ENCODE measurements at regions of chr12 and their contacts with region 1.

Region 1: DNA sequence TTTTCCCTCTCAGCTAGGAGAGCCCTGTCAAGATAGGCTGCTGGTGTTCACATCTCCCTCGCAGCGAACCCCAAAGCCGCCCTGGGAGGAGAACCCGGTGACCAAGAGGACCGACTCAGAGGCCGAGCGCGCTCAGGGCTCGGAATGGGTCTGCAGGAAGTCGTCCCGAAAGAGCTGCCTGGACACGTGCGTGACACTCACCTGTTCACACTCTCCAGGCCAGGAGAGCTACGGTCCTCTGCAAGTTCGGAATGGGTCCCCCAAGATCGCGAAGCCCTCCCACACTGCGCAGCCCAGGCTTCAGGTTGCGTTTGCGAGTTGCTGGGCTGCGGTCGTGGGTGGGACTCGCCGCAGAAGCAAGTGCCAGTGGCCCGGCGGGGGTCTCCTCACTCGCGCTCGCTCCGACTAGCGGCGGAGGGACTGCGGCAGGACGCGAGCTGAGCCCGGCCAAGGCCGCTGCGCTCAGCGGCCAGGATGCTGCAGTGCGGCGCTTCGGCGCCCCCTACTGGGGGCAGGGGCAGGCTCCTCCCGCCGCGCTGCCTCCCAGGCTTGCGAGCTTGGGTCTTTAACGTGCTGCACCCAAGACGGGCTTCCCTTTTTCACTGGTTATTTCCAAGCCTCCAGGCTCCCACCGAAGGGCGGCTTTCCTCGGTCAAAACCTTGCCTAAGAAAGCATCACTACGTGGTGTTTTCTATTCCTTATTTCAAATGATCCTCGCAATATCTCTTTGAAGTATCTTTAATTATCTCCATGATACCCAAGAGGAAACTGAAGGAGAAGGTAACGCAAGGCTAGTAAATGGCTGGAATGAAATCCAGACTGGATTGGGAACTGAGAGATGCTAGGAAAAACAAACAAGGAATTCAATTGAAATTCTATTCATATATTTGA is at the start of gene RERG:
- DNase-seq: peak; percentile 50 to 86 (median 68)
- ATAC-seq: peak; percentile 99
- H3K4me3 ChIP-seq: peak within 1 kb of the TSS; percentile 49
- H3K4me3 Mint-ChIP-seq: peak within 1 kb of the TSS; percentile 71
- H3K27ac ChIP-seq: no peak within 1 kb of the TSS
- H3K27ac Mint-ChIP-seq: no peak within 1 kb of the TSS
- H3K4me1 ChIP-seq: peaks cover 10% of the 10 kb centered on the region
- H3K4me1 Mint-ChIP-seq: peaks cover 13% of the 10 kb centered on the region
- H3K27me3 ChIP-seq: peaks cover 7 to 34% of the 10 kb centered on the region in 2 experiments
- H3K27me3 Mint-ChIP-seq: peaks cover 42% of the 10 kb centered on the region
- CTCF ChIP-seq: peak; percentile 94
- total RNA-seq, gene RERG: not detected

Region 2: DNA sequence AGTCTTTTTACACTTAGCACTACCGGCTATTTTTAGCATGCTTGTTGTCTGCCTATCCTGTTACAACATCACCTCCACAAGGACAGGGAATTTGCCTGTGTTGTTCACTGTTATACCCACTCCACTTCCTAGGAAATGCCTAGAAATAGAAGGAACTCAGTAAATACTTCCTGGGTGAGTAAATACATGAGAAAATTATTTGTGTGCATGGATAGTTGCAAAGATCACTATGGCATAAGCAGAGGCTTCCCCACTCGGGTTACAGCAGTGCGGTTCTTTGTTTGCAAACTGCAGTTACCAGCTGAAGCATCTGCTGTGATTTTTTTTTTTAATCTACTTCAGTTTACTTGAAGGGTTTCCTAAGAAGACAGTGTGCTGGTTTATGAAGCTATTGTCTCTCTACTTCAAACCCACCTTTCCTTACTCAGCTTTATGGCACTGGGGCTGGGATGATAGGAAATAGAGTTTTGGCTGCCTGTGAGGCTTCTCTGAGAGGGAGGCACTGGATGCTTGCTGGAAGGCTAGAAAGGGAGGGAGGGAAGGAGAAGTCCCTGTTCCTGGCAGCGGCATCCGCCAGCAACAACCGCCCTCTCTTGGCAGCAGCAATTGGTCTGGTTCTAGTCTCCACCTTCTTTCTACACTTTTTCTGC is 219.4 kb before region 1 on chr12:
- CTCF ChIA-PET with region 1: interaction called, 3 read pairs
- POLR2A ChIA-PET with region 1: no interaction called
- intact Hi-C with region 1: loop called (anchors 5 kb)
- DNase-seq: no peak
- ATAC-seq: no peak
- H3K4me3 ChIP-seq: no peak overlapping the region
- H3K4me3 Mint-ChIP-seq: no peak overlapping the region
- H3K27ac ChIP-seq: no peak overlapping the region
- H3K27ac Mint-ChIP-seq: no peak overlapping the region
- H3K4me1 ChIP-seq: no peaks in the 10 kb centered on the region
- H3K4me1 Mint-ChIP-seq: no peaks in the 10 kb centered on the region
- H3K27me3 ChIP-seq: peaks cover 18 to 20% of the 10 kb centered on the region in 2 experiments
- H3K27me3 Mint-ChIP-seq: peaks cover 34% of the 10 kb centered on the region
- CTCF ChIP-seq: no peak

Region 3: GRCh38 chr12:15208125-15208524 is 13.1 kb before region 1 on chr12:
- CTCF ChIA-PET with region 1: interaction called, 11 read pairs
- POLR2A ChIA-PET with region 1: interaction called, 5 read pairs
- intact Hi-C with region 1: no loop called
- DNase-seq: no peak
- ATAC-seq: no peak
- H3K4me3 ChIP-seq: no peak overlapping the region
- H3K4me3 Mint-ChIP-seq: no peak overlapping the region
- H3K27ac ChIP-seq: no peak overlapping the region
- H3K27ac Mint-ChIP-seq: no peak overlapping the region
- H3K4me1 ChIP-seq: no peaks in the 10 kb centered on the region
- H3K4me1 Mint-ChIP-seq: no peaks in the 10 kb centered on the region
- H3K27me3 ChIP-seq: peaks cover 0 to 10% of the 10 kb centered on the region in 2 experiments
- H3K27me3 Mint-ChIP-seq: peaks cover 28% of the 10 kb centered on the region
- CTCF ChIP-seq: no peak

Measured in CD4-positive, alpha-beta T cell (primary cell).